Motor neuron (in vitro differentiated cells): ENCODE measurements at regions of chr3 and their contacts with region 1.

Region 1: DNA sequence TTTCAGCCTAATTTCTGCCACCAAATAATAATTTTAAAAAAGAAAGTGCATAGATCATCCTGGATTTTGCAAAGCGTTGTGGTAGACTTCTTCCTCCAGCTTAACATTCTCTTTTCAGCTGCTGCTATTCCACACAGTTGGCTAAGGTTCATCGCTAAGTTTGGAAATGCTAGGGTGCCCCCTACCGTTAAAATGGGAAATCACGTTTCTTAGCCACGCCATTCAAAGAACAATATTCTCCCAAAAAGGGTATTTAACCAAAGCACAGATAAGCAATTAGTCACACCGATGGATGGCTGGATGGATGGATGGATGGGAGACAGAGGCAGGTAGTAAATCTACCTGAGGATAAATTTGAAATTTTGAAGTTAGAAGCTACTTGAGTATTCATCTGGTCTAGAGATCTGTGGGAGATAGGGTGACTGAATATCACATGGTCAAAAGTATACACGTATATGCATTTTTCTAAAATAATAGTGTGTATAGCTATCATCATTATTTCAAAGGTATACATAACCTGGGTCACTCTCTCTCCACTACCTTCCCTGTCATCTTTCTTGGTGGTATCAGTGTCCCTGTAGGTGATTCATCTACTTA is 67.2 kb downstream of the EFHB start:
- ATAC-seq: peak; percentile 60 to 88 (median 78)
- H3K4me3 ChIP-seq: no peak overlapping the region
- H3K27ac ChIP-seq: no peak overlapping the region
- H3K4me1 ChIP-seq: no peaks in the 10 kb centered on the region

Region 2: DNA sequence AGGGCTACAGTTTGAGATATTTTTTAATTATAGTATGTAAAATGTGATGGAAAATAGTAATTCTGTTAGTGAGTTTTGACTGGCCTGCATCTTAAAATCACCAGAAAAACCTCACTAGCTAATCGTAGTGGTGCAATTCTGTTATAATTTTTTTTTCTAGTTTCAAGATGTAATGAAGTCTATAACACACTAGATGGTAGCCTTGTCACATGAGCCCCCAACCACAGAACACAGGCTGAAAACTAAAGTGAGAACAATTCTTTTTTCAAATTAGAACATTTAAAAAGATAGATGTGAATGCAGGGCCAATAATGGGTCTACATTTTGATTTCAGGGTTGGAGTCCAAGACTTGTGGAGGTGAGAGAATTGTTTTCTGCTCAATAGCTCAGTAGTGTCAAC is 801.8 kb before region 1 on chr3:
- in situ Hi-C with region 1: loop called in 6 of 9 experiments (anchors 10 to 25 kb)
- ATAC-seq: peak in 6 of 8 experiments; percentile 21 to 62 (median 40)
- H3K4me3 ChIP-seq: no peak overlapping the region
- H3K27ac ChIP-seq: no peak overlapping the region
- H3K4me1 ChIP-seq: no peaks in the 10 kb centered on the region

Region 3: GRCh38 chr3:19074257-19074900 is 792.5 kb before region 1 on chr3:
- in situ Hi-C with region 1: loop called in 6 of 9 experiments (anchors 10 to 25 kb)
- ATAC-seq: peak in 2 of 8 experiments; percentile 35 to 48
- H3K4me3 ChIP-seq: no peak overlapping the region
- H3K27ac ChIP-seq: no peak overlapping the region
- H3K4me1 ChIP-seq: peaks cover 0 to 3% of the 10 kb centered on the region in 2 donors

Region 4: GRCh38 chr3:19348929-19349564 is 517.8 kb before region 1 on chr3:
- in situ Hi-C with region 1: loop called in 1 of 9 experiments (anchors 25 kb)
- ATAC-seq: peak in 3 of 8 experiments; percentile 72 to 77 (median 76)
- H3K4me3 ChIP-seq: no peak overlapping the region
- H3K27ac ChIP-seq: no peak overlapping the region
- H3K4me1 ChIP-seq: no peaks in the 10 kb centered on the region

Region 5: DNA sequence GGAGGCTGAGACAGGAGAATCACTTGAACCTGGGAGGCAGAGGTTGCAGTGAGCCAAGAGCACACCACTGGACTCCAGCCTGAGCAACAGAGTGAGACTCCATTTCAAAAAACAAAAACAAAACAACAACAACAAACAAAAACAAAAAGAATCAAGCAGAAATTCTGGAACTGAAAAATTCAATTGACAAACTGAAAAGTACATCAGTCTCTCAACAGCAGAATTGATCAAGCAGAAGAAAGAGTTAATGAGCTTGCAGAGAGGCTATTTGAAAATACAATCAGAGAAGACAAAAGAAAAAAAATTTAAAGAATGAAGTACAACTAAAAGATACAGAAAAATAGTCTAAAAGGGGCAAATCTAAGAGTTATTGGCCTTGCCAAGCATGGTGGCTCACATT is 44.6 kb after region 1 on chr3:
- in situ Hi-C with region 1: no loop called
- ATAC-seq: no peak
- H3K4me3 ChIP-seq: no peak overlapping the region
- H3K27ac ChIP-seq: no peak overlapping the region
- H3K4me1 ChIP-seq: no peaks in the 10 kb centered on the region

Region 6: GRCh38 chr3:19994796-19995195 is 127.9 kb after region 1 on chr3:
- in situ Hi-C with region 1: no loop called
- ATAC-seq: no peak
- H3K4me3 ChIP-seq: no peak overlapping the region
- H3K27ac ChIP-seq: no peak overlapping the region
- H3K4me1 ChIP-seq: no peaks in the 10 kb centered on the region